ENCODE measurements at regions of chrX and their contacts with region 1.

Region 1: DNA sequence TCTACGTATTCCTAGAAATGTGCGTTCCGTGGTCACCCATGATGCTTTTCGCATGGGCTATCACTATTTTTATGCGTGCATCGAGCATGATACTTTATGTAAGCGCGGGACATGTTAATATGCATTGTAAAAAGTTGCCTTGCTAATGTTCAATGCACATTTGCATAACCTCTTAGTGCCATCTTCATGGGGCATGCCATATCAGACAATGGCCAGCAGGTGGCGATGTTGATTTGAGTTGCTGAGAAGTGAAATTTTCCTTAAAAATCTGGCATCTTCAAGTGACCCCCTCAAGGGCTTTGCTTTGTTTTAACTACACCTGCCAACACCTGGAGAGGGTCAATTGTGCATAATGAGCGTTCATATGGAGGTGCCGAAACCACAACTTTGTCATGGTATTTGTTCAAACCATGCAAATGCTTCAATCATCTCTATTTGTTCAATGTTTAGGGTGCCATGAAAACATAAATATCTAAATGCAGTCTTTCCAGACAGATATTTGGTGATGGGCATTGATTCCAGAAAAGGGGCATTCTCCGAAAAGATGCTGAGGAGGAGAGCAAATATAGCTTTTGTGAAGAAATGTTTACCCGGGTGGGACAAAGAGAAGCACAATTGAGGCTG is 833.9 kb upstream of the PRKX start:
- DNase-seq: peak; percentile 30 to 67 (median 47)
- H3K4me3 ChIP-seq: no peak overlapping the region
- H3K27ac ChIP-seq: no peak overlapping the region
- H3K4me1 ChIP-seq: no peaks in the 10 kb centered on the region
- H3K27me3 ChIP-seq: no peaks in the 10 kb centered on the region
- CTCF ChIP-seq: peak; percentile 66 to 95 (median 84)
- POLR2A ChIP-seq: no peak

Region 2: GRCh38 chrX:4787987-4788386 is 240.7 kb after region 1 on chrX:
- intact Hi-C with region 1: no loop called
- DNase-seq: no peak
- H3K4me3 ChIP-seq: no peak overlapping the region
- H3K27ac ChIP-seq: no peak overlapping the region
- H3K4me1 ChIP-seq: no peaks in the 10 kb centered on the region
- H3K27me3 ChIP-seq: peaks cover 6% of the 10 kb centered on the region
- CTCF ChIP-seq: no peak
- POLR2A ChIP-seq: no peak

Region 3: GRCh38 chrX:5113128-5113527 is 565.8 kb after region 1 on chrX:
- intact Hi-C with region 1: loop called (anchors 5 to 10 kb)
- DNase-seq: no peak
- H3K4me3 ChIP-seq: no peak overlapping the region
- H3K27ac ChIP-seq: no peak overlapping the region
- H3K4me1 ChIP-seq: no peaks in the 10 kb centered on the region
- H3K27me3 ChIP-seq: no peaks in the 10 kb centered on the region
- CTCF ChIP-seq: peak; percentile 18 to 62 (median 46)
- POLR2A ChIP-seq: no peak